ENCODE measurements at regions of chr12 and their contacts with region 1.

Region 1: DNA sequence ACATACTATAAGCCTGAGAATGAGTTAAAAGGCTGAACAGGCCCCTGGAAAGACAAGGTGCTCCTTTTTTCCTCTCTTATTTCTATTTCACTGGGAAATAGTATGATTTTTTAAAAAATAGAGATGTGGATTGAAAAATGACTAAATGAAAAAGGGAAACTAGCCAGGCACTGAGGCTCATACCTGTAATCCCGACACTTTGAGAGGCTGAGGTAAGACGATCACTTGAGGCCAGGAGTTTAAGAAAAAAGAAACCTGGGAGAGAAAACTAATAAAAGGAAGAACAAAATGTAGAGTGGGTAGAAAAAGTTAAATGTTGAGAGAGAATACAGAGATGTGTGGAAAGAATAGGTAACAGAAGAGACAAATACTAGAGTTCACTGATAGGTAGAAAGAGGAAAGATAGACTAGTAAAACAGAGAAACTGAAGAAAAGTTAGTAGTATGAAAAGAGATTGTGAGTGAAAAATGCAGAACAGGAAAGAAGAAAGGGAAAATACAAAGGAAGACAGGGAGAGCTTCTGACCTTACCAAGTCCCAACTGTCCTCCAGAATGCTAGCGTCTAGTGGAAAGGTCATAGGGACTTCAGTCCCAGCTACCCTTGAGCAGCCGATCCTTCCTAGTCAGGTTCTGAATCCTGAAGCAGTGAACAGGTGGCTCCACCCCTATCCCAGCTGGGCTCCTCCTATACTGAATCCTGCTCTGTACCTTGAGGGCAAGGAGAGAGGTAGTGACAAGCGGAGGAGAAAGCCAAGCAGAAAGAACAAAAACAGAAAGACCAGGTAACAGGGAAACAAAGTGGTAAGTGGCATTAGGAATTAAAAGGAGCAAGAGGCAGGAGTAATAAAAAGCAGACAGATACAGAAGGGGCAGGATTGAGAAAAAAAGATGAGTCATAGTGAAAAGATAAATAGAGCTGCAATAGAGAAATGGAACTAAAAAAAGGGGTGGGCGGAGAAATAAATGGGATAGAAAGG is 7.3 kb downstream of the TMEM116 start:
- DNase-seq: no peak
- ATAC-seq: no peak
- H3K4me3 ChIP-seq: no peak overlapping the region
- H3K4me3 Mint-ChIP-seq: no peak overlapping the region
- H3K27ac ChIP-seq: no peak overlapping the region
- H3K27ac Mint-ChIP-seq: no peak overlapping the region
- H3K4me1 ChIP-seq: peaks cover 23 to 28% of the 10 kb centered on the region in 2 donors
- H3K4me1 Mint-ChIP-seq: peaks cover 29% of the 10 kb centered on the region
- H3K27me3 ChIP-seq: no peaks in the 10 kb centered on the region
- H3K27me3 Mint-ChIP-seq: no peaks in the 10 kb centered on the region
- CTCF ChIP-seq: no peak

Region 2: GRCh38 chr12:111074559-111074958 is 931.1 kb before region 1 on chr12:
- CTCF ChIA-PET with region 1: no interaction called
- POLR2A ChIA-PET with region 1: no interaction called
- intact Hi-C with region 1: no loop called
- DNase-seq: no peak
- ATAC-seq: no peak
- H3K4me3 ChIP-seq: no peak overlapping the region
- H3K4me3 Mint-ChIP-seq: no peak overlapping the region
- H3K27ac ChIP-seq: no peak overlapping the region
- H3K27ac Mint-ChIP-seq: no peak overlapping the region
- H3K4me1 ChIP-seq: no peaks in the 10 kb centered on the region
- H3K4me1 Mint-ChIP-seq: no peaks in the 10 kb centered on the region
- H3K27me3 ChIP-seq: peaks cover 0 to 11% (median 0%) of the 10 kb centered on the region in 4 experiments
- H3K27me3 Mint-ChIP-seq: peaks cover 28% of the 10 kb centered on the region
- CTCF ChIP-seq: no peak

Region 3: DNA sequence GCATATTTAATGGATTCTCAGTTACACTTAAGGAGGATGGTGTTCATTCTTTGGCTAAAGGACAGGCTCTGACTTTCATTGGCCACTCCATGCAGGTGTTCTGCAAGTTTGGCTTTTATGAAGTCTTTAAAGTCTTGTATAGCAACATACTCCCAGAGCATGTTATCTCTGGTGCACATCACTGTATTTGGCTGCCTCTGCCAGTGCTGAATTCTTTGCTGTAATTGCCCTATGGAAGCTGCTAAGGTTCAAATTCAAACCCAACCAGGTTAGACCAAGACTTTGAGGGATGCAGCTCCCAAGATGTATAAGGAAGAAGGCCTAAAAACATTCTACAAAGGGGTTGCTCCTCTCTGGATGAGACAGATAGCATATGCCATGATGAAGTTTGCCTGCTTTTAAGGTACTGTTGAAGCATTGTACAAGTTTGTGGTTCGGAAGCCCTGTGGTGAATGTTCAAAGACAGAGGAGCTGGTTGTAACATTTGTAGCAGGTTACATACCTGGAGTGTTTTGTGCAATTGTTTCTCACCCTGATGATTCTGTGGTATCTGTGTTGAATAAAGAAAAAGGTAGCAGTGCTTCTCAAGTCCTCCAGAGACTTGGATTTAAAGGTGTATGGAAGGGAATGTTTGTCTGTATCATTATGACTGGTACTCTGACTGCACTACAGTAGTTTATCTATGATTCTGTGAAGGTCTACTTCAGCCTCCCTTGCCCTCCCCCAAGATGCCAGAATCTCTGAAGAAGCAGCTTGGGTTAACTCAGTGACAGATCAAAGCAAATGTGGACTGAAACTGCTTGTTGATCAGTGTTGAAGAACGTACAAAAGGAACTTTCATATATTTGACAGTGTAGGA is 12.2 kb before region 1 on chr12:
- CTCF ChIA-PET with region 1: no interaction called
- POLR2A ChIA-PET with region 1: interaction called, 4 read pairs
- intact Hi-C with region 1: loop called (anchors 1 kb)
- DNase-seq: peak; percentile 16
- ATAC-seq: peak; percentile 10
- H3K4me3 ChIP-seq: peak overlapping the region in 2 of 5 experiments; percentile 7 to 60
- H3K4me3 Mint-ChIP-seq: peak overlapping the region; percentile 91
- H3K27ac ChIP-seq: no peak overlapping the region
- H3K27ac Mint-ChIP-seq: no peak overlapping the region
- H3K4me1 ChIP-seq: peaks cover 42 to 45% of the 10 kb centered on the region in 2 donors
- H3K4me1 Mint-ChIP-seq: peaks cover 42% of the 10 kb centered on the region
- H3K27me3 ChIP-seq: peaks cover 0 to 17% (median 12%) of the 10 kb centered on the region in 4 experiments
- H3K27me3 Mint-ChIP-seq: peaks cover 26% of the 10 kb centered on the region
- CTCF ChIP-seq: no peak

Region 4: GRCh38 chr12:112705037-112705661 is 699.4 kb after region 1 on chr12:
- CTCF ChIA-PET with region 1: no interaction called
- POLR2A ChIA-PET with region 1: no interaction called
- intact Hi-C with region 1: no loop called
- DNase-seq: no peak
- ATAC-seq: no peak
- H3K4me3 ChIP-seq: no peak overlapping the region
- H3K4me3 Mint-ChIP-seq: no peak overlapping the region
- H3K27ac ChIP-seq: no peak overlapping the region
- H3K27ac Mint-ChIP-seq: no peak overlapping the region
- H3K4me1 ChIP-seq: no peaks in the 10 kb centered on the region
- H3K4me1 Mint-ChIP-seq: no peaks in the 10 kb centered on the region
- H3K27me3 ChIP-seq: peaks cover 0 to 3% (median 1%) of the 10 kb centered on the region in 4 experiments
- H3K27me3 Mint-ChIP-seq: peaks cover 33% of the 10 kb centered on the region
- CTCF ChIP-seq: no peak